Activated naive CD4-positive, alpha-beta T cell treated with anti-CD3 and anti-CD28 coated beads for 36 hours (primary cell): ENCODE measurements at regions of chr20 and their contacts with region 1.

Region 1: GRCh38 chr20:40990542-40991120 is 38.0 kb upstream of the TOP1 start:
- DNase-seq: peak; percentile 89
- H3K4me3 Mint-ChIP-seq: no peak overlapping the region
- H3K27ac Mint-ChIP-seq: peak overlapping the region; percentile 72
- H3K4me1 Mint-ChIP-seq: peaks cover 21% of the 10 kb centered on the region
- H3K27me3 Mint-ChIP-seq: no peaks in the 10 kb centered on the region

Region 2: DNA sequence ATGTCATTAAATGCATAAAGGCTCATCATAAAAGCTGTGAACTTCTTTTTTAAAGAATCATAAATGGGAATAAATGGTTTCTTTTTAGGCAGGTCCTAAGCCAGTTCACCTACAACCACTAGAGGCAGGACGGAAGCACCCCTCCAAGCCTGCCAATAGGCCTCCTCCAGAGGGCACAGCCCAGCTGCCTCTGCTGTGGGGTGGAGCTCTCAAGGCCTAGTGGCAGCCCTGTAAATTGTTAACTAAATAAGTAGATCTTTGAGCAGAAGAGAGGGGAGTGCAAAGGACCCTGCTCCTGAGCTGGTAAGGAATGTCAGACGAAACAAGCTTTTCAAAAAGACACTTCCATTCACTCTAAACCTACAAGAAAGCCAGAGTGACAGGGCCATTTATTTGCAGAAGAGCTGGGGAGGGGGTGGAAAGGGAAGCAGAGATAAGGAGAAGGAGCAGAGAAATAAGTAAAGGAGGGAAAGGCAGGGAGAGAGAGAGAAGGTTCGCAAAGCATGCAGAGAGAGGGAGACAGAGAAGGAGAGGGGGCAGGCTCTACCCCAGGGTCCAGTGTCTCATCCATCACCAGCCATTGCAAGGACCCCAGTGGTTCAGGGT is 283.6 kb before region 1 on chr20:
- CTCF ChIA-PET with region 1: no interaction called
- intact Hi-C with region 1: no loop called
- DNase-seq: no peak
- H3K4me3 Mint-ChIP-seq: no peak overlapping the region
- H3K27ac Mint-ChIP-seq: no peak overlapping the region
- H3K4me1 Mint-ChIP-seq: no peaks in the 10 kb centered on the region
- H3K27me3 Mint-ChIP-seq: peaks cover 2% of the 10 kb centered on the region

Region 3: DNA sequence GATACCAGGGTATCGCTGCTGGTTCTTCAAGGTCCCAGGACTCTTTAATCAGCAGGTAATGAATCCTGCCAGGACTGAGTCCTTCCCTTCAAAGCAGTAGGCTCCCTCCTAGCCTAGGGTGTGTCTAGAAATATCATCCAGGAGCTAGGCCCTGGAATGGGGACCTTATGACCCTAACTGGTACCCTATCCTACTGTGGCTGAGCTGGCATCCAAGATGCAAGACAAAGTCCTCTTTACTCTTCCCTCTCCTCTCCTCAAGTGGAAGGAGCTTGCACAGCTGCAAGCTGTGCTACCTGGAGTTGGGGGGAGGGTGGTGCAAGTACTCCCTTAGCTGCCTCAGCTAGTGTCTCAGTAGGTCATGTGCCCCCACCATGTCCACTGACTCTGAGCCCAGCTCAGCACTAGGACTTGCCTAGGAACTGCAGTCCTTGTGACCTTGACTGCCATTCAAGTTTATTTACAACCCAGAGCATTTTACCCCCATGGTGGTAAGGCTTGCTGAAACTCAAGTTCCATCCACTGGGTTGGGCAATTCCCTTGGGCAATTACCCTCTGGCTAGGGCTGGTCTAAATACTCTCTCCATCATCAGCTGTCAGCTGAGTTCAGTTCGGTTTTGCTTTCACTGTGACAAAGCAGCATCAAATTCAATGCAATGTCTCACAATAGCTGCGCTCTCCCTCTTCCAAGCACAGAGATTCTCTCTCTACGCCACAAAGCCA is 10.4 kb before region 1 on chr20:
- CTCF ChIA-PET with region 1: interaction called, 20 read pairs
- intact Hi-C with region 1: no loop called
- DNase-seq: no peak
- H3K4me3 Mint-ChIP-seq: no peak overlapping the region
- H3K27ac Mint-ChIP-seq: no peak overlapping the region
- H3K4me1 Mint-ChIP-seq: no peaks in the 10 kb centered on the region
- H3K27me3 Mint-ChIP-seq: peaks cover 6% of the 10 kb centered on the region

Region 4: DNA sequence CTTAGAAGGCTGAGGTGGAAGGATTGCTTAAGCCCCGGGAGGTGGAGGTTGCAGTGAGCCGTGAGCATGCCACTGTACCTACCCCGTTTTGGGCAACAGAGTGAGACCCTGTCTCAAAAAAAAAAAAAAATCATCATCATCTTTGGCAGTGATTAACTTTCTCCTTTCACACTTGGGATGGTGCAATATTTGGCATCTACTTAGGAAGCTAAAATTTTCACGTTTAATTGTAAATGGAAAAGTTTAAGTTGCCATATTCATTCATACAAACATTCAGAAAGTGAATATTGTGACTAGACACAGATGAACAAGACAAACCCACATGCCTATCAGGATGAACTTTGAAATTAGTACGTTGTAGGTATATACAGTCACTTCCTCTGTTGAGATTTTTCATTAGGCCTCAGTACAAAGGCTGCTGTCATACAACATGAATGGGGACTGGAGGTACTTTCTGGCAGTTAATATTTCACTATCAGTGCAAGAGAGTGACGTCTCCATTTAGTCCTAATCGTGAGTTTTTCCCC is 48.3 kb after region 1 on chr20:
- CTCF ChIA-PET with region 1: interaction called, 7 read pairs
- intact Hi-C with region 1: loop called (anchors 2 kb)
- DNase-seq: no peak
- H3K4me3 Mint-ChIP-seq: no peak overlapping the region
- H3K27ac Mint-ChIP-seq: peak overlapping the region; percentile 73
- H3K4me1 Mint-ChIP-seq: peaks cover 93% of the 10 kb centered on the region
- H3K27me3 Mint-ChIP-seq: no peaks in the 10 kb centered on the region

Region 5: DNA sequence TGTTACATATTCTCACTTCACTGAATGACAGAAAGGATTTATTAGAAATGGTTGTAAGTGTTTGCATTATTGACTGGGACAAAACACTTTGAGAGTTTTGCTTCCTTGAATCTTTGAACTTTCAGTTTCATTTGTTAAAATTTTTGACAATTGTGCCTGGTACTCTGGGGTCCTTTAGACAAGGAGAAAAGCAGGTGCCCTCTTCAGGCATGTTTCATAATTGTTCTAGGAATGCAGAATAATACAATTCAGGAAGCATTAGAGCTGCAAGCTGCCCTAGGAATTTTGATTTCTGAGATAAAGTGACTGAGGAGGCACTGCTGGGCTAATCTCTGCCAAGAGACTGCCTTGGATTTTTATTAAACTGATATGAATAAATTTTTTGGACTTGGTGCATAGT is 87.7 kb after region 1 on chr20:
- CTCF ChIA-PET with region 1: interaction called, 20 read pairs
- intact Hi-C with region 1: loop called (anchors 1 kb)
- DNase-seq: no peak
- H3K4me3 Mint-ChIP-seq: no peak overlapping the region
- H3K27ac Mint-ChIP-seq: peak overlapping the region; percentile 30
- H3K4me1 Mint-ChIP-seq: peaks cover 48% of the 10 kb centered on the region
- H3K27me3 Mint-ChIP-seq: no peaks in the 10 kb centered on the region

Region 6: DNA sequence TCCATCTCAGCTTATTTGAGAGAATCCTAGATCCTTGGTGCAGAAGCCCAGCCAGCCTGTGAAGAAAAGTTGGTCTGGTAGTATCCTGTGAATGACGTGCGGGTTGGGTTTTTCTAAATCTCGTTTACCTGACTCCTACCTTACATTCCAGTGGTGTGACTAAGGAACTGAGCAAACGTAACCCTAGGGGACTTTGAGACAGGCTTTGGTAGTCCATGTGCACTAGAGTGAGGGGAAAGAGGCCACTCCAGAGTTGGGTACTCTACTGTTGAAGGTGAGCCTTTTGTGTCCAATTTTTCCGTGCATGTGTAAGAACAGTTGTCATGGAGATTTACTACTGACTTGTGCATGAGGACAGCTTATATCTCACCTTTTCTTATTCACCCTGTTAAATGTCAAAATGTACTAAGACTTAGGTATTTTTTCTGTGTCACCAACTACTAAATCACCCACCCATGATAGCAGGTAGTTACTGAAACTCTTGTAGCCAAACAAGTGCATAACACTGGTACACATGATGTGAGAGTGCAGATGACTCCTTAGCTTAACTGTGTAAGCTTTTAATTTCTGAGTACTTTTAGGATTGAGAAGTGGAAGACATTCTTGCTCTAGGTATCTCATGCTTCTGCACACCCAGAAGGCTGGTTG is 120.4 kb after region 1 on chr20:
- CTCF ChIA-PET with region 1: interaction called, 10 read pairs
- intact Hi-C with region 1: no loop called
- DNase-seq: no peak
- H3K4me3 Mint-ChIP-seq: no peak overlapping the region
- H3K27ac Mint-ChIP-seq: peak overlapping the region; percentile 3
- H3K4me1 Mint-ChIP-seq: no peaks in the 10 kb centered on the region
- H3K27me3 Mint-ChIP-seq: no peaks in the 10 kb centered on the region